Panc1 (cell line): ENCODE measurements at regions of chr21 and their contacts with region 1.

Region 1: DNA sequence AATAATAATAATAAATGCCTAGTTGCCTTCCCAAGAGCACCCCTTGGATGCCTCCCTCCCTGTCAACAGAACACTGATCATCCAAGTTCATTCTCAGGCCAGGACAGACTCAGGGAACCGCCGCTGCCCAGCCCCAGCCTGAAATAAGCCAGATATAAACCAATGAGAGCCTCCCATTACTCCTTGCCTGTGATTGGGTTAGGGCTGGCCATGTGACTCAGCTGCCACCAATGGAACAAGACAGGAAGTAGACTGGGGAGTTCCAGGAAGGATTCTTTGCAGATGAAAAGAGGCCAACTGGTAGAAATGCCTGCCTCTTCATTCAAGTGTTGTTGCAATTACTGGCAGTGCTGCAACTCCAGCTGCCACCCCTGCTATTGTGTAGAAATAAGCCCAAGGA is 146.4 kb upstream of the TIAM1 start:
- DNase-seq: no peak
- ATAC-seq: no peak
- H3K4me3 ChIP-seq: no peak overlapping the region
- H3K27ac ChIP-seq: no peak overlapping the region
- H3K4me1 ChIP-seq: no peaks in the 10 kb centered on the region
- H3K27me3 ChIP-seq: no peaks in the 10 kb centered on the region
- CTCF ChIP-seq: no peak

Region 2: GRCh38 chr21:31514598-31514997 is 24.2 kb after region 1 on chr21:
- CTCF ChIA-PET with region 1: no interaction called
- POLR2A ChIA-PET with region 1: interaction called, 10 read pairs
- in situ Hi-C with region 1: no loop called
- intact Hi-C with region 1: no loop called
- DNase-seq: no peak
- ATAC-seq: peak; percentile 76; the same call in 1 of the 2 replicates
- H3K4me3 ChIP-seq: no peak overlapping the region
- H3K27ac ChIP-seq: no peak overlapping the region
- H3K4me1 ChIP-seq: no peaks in the 10 kb centered on the region; the same call in 1 of the 2 replicates
- H3K27me3 ChIP-seq: no peaks in the 10 kb centered on the region
- CTCF ChIP-seq: peak; percentile 29; the same call in 1 of the 2 replicates

Region 3: GRCh38 chr21:31612894-31613745 is 122.7 kb after region 1 on chr21:
- CTCF ChIA-PET with region 1: no interaction called
- POLR2A ChIA-PET with region 1: no interaction called
- in situ Hi-C with region 1: no loop called
- intact Hi-C with region 1: no loop called
- DNase-seq: no peak
- ATAC-seq: no peak
- H3K4me3 ChIP-seq: no peak overlapping the region
- H3K27ac ChIP-seq: no peak overlapping the region
- H3K4me1 ChIP-seq: no peaks in the 10 kb centered on the region
- H3K27me3 ChIP-seq: no peaks in the 10 kb centered on the region
- CTCF ChIP-seq: no peak